ENCODE measurements at regions of chr4 and their contacts with region 1.

Region 1: DNA sequence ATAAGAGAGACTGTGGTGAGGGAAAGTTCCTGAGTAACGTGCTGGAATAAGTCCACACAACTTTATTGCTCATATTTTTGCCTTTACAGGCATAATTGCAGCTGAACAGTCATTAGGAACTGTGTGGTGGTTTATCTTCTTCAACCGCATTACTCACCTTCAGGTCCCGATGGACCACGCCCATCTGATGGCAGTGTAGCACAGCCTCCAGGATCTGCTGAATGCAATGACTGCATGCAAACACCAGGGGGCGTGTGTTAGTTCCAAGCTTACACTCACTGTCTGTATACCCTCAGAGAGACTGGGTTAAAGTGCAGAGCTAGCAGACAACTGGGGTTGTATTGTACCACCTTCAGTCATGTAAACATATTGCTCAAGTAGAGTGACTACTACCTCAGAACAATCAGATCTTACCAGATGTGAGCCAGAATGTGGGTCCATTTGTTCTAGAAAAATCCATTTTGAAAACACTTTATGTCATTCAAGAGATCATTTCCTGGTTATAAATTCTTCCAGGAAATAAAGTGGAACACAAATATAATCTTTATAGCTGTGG is 214.0 kb downstream of the CAMK2D start:
- DNase-seq: peak; percentile 88 to 92
- ATAC-seq: peak; percentile 96
- H3K4me3 ChIP-seq: no peak overlapping the region
- H3K27ac ChIP-seq: no peak overlapping the region
- H3K4me1 ChIP-seq: peaks cover 0 to 2% of the 10 kb centered on the region in 2 donors
- H3K27me3 ChIP-seq: no peaks in the 10 kb centered on the region

Region 2: DNA sequence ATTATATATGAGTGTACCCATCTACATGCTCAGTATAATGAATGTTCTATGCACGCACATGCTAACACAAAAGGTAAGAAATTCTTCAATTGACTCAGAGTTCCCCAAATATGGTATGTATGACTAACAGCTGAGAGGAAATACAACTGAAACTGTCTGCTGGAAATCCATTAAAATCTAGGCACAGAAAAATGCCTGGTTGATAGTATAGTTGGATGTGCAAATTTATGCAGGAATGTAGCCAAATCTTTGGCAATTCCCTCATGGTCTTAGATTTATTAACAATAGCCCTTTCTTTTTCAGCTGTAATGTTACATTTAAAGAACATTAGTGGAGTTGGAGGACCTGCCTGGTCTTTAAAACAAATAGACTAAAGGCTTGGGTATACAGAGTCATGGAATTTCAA is 208.4 kb after region 1 on chr4:
- intact Hi-C with region 1: loop called (anchors 1 to 5 kb)
- DNase-seq: no peak
- ATAC-seq: no peak
- H3K4me3 ChIP-seq: no peak overlapping the region
- H3K27ac ChIP-seq: no peak overlapping the region
- H3K4me1 ChIP-seq: no peaks in the 10 kb centered on the region
- H3K27me3 ChIP-seq: no peaks in the 10 kb centered on the region

Region 3: DNA sequence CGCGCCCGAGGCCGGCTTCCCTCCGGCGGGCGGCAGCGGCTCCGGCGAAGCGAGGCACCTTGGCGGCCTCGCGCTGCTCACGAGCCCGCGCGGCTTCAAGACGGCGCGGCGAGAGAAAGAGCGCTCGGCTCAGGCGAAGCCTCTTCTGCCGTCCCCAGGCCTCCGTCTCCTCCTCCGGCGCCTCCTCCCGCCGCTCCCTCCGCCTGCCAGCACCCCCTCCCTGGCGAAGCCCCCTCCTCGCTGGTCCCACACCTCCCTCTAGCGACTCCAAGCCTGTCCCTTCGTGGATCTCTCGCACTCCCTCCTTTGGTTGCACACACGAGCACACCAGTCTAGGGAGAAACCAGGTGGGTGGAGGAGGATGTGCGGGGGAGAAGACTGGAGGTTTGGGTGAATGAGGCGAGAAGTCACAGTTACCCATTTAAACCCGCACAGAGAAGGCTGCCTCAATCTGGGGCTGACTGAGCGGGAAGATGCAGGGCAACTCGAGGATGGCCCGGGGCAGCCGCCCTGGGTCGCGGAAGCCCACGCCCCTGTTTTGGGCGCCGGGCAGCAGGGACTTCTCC is 214.1 kb after region 1 on chr4 and contains the start of gene CAMK2D:
- intact Hi-C with region 1: loop called (anchors 1 to 5 kb)
- DNase-seq: peak; percentile 91 to 93
- ATAC-seq: peak; percentile 90
- H3K4me3 ChIP-seq: peak within 1 kb of the TSS; percentile 51 to 77
- H3K27ac ChIP-seq: peak within 1 kb of the TSS; percentile 64 to 90
- H3K4me1 ChIP-seq: no peaks in the 10 kb centered on the region
- H3K27me3 ChIP-seq: no peaks in the 10 kb centered on the region
- total RNA-seq, gene CAMK2D: 52.3 to 71.8 TPM

Region 4: GRCh38 chr4:114072781-114073180 is 525.2 kb after region 1 on chr4:
- intact Hi-C with region 1: no loop called
- DNase-seq: no peak
- ATAC-seq: no peak
- H3K4me3 ChIP-seq: no peak overlapping the region
- H3K27ac ChIP-seq: no peak overlapping the region
- H3K4me1 ChIP-seq: no peaks in the 10 kb centered on the region
- H3K27me3 ChIP-seq: no peaks in the 10 kb centered on the region